Aorta (tissue), 5 donors: ENCODE measurements at regions of chr20 and their contacts with region 1.

Region 1: DNA sequence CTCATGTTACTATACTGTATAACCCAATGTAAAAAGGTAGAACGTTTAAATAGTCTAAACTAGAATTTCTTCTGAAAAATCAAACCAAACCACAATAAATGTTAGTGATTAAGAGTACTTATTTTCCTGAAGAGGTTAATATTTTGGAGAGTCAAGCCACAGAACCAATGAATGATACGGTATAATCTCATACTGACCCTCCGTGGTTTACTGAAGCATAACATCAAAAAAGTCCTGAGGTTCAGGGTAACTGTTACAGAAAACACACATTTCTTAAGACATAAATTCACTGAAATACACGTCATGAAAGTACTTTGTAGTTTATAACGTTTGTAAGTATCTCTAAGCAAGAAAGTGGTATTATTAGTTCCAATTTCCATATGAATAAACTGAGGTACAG is 28.9 kb downstream of the ESF1 start:
- DNase-seq: no peak
- ATAC-seq: no peak
- H3K4me3 ChIP-seq: no peak overlapping the region
- H3K27ac ChIP-seq: no peak overlapping the region
- H3K4me1 ChIP-seq: peaks cover 0 to 2% of the 10 kb centered on the region in 2 donors
- H3K27me3 ChIP-seq: no peaks in the 10 kb centered on the region

Region 2: GRCh38 chr20:13554706-13555105 is 201.1 kb before region 1 on chr20:
- intact Hi-C with region 1: loop called (anchors 10 kb)
- DNase-seq: no peak
- ATAC-seq: no peak
- H3K4me3 ChIP-seq: no peak overlapping the region
- H3K27ac ChIP-seq: no peak overlapping the region
- H3K4me1 ChIP-seq: no peaks in the 10 kb centered on the region
- H3K27me3 ChIP-seq: no peaks in the 10 kb centered on the region

Region 3: DNA sequence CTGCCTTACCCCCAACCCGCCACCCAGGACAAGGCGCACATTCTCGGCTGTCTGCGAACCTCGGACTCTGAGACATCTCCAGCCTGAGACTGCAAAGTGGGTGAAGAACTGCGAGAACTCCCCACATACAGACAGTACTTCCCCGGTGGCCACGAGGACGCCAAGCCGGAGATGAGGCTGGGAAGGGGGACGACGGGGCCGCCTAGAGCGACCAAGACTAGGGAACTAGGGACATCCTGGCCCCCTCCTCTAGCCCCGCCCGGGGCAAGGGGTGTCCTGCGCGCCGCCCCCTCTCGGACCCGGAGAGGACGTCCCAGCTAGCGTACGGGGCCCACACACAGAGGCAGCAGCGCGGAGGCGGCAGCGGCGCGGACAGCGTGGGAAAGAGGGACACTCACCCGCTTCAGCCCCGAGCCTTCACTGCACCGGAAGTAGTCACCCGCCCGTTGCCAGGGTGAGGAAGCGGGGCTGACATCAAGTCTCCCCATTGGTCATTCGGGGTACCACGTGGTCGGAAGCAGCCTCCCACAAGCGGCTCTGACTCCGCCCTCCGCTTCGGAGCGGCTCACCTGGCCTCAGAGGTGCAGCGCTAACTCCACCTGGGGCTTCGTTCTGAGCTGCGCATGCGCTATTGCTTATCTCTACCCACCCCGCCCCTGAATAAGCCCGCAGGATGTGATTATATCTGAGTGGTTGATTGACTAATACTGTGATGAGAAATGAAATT is 117.2 kb before region 1 on chr20 and contains the start of gene TASP1:
- intact Hi-C with region 1: no loop called
- DNase-seq: peak; percentile 98
- ATAC-seq: peak; percentile 99
- H3K4me3 ChIP-seq: peak within 1 kb of the TSS; percentile 80 to 81
- H3K27ac ChIP-seq: peak within 1 kb of the TSS in 1 of 2 donors; percentile 81
- H3K4me1 ChIP-seq: no peaks in the 10 kb centered on the region
- H3K27me3 ChIP-seq: no peaks in the 10 kb centered on the region
- total RNA-seq, gene TASP1: 32.8 to 74.6 TPM